Colonic mucosa (tissue), 4 donors: ENCODE measurements at regions of chr17 and their contacts with region 1.

Region 1: DNA sequence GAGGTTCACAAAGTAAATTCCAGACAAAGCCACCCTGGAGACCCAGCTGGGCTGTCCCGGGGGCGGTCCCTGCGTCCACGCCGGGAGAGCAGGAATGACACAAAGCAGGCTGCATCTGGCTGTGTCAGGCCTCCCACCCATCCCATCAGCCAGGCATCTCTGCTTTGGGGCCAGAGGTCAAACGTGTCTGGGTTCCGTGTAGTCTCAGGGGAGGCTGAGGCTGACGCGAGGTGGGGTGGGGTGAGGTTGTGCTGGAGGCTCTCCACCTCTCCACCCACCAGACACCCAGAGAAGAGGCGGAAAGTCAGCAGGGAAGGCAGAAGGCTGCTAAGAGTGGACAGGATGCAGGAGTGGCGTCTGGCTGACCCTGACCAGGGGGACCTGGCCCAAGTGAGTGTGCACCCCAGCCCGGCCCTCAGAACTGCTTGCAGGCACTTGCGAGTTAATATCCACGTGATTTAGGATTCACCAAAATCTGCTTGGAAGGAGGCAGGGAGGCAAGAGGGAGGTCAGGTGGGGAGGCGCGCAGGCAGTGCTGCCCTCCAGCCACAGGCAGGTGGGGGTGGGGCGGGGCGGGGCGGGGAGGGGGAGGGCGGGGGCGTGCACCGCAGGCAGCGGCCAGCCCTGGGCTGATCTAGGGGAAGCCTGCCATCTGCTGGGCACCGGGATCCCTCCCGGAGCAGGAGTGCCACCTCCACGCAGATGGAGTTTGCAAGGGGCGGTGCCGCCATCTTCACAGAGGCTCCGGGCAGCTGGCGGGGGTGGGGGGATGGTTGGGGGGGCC is 44.3 kb downstream of the TBC1D16 start:
- DNase-seq: peak; percentile 92
- H3K4me3 ChIP-seq: peak overlapping the region; percentile 35
- H3K27ac ChIP-seq: peak overlapping the region; percentile 56
- H3K4me1 ChIP-seq: peaks cover 48% of the 10 kb centered on the region
- H3K27me3 ChIP-seq: no peaks in the 10 kb centered on the region
- CTCF ChIP-seq: peak; percentile 50

Region 2: GRCh38 chr17:79741751-79742588 is 249.4 kb before region 1 on chr17:
- intact Hi-C with region 1: loop called (anchors 5 kb)
- DNase-seq: peak; percentile 77
- H3K4me3 ChIP-seq: no peak overlapping the region
- H3K27ac ChIP-seq: no peak overlapping the region
- H3K4me1 ChIP-seq: no peaks in the 10 kb centered on the region
- H3K27me3 ChIP-seq: peaks cover 22% of the 10 kb centered on the region
- CTCF ChIP-seq: peak; percentile 94

Region 3: DNA sequence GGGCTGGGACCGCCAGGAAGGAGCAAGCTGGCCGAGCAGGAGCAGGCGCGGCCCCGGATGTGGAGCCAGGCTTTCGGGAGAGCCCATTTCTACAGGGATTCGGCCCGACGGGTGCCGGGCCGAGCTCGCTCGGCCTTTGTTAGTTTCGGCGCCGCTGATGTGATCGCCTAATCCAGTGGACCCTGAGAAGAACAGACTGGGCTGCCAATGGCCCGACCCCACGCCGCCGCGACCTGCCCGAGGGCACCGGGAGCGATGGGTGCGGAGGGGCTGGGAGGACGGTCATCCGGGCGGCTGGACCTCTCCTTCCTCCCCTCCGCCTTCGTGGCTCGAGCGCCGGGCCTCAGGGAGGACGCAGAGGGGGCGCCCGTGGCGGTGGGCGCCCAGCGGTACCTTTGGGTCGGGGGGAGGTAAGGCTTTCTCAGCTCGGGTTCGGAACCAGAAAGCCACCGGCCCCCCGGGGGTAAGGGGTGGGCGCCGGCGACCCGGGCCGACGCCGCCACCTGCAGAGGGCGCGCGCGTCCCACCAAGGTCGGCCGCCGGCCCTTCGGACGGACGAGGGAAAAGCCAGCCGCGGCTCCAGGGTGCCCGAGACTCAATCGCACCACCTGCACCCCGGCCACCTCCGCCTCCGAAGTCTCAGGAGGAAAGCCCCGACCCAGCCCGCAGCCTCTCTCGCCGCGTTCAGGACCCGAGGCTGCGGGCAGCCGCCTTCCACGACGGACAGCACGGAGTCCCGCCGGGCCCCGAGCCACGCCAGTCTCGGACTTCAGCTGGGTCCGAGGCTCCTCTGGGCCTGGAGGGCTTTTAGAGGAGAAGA is 201.6 kb before region 1 on chr17:
- intact Hi-C with region 1: loop called (anchors 5 kb)
- DNase-seq: no peak
- H3K4me3 ChIP-seq: no peak overlapping the region
- H3K27ac ChIP-seq: no peak overlapping the region
- H3K4me1 ChIP-seq: peaks cover 12% of the 10 kb centered on the region
- H3K27me3 ChIP-seq: peaks cover 54% of the 10 kb centered on the region
- CTCF ChIP-seq: peak; percentile 78

Region 4: DNA sequence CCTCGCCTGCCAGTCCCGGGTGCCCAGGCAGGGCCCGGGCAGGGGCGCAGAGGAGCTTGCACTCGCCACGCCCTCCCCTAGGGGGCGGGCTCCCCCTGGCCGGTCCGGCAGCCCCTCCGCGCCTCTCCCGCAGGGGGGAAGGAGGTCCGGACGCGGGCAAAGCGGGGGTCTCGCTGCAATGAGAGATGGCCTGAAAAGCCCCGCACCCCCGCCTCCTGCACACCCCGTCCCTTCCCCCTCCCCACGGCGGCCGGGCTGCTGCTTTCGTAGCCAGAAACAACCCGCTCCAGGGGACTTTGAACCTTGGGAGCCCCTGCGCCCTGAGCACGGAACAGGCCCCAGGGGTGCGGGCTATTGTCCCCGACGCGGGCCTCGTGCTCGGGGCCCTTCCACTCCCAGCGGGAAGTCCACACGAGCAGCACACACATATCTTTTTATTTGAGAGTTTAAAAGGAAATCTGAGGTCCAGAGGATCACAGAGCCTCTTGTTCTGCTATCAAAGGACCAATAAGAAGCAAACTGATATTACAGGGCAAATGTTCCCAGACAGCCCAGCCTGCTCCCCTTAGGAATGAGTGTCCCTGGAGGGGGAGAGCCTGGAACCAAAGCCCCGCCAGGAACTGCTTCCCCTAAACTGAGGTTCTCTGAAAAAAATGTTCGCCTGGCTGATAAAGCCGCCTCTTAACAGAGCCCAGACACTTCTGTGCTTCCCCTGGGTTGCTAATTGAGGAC is 146.3 kb before region 1 on chr17:
- intact Hi-C with region 1: loop called (anchors 5 kb)
- DNase-seq: peak; percentile 67
- H3K4me3 ChIP-seq: peak overlapping the region; percentile 50
- H3K27ac ChIP-seq: peak overlapping the region; percentile 45
- H3K4me1 ChIP-seq: peaks cover 36% of the 10 kb centered on the region
- H3K27me3 ChIP-seq: peaks cover 40% of the 10 kb centered on the region
- CTCF ChIP-seq: peak; percentile 73